MCF 10A (cell line): ENCODE measurements at regions of chr4 and their contacts with region 1.

Region 1: GRCh38 chr4:100093091-100093866 is 97.0 kb downstream of the DDIT4L start:
- DNase-seq: peak; percentile 94
- H3K4me3 Mint-ChIP-seq: no peak overlapping the region
- H3K27ac Mint-ChIP-seq: peak overlapping the region; percentile 87
- H3K4me1 Mint-ChIP-seq: peaks cover 19% of the 10 kb centered on the region
- H3K27me3 Mint-ChIP-seq: no peaks in the 10 kb centered on the region
- CTCF ChIP-seq: peak; percentile 66

Region 2: DNA sequence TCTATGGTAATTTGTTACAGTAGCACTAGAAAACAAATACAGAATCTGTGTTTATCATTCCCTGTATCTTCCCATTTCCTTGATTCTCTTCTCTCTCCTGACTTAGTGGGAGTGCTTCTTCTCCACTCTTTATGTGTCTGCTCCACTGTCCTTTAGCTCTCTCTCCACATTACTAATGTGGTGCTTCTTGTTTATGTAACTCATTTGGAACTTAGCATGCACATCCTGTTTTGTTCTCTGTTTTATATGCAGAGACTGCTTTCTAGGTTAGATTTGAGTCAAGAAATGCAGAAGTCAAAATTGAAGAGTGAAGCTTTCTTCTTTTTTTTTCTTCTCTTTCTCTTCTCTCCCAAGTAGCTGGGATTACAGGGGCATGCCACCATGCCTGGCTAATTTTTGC is 828.4 kb before region 1 on chr4:
- CTCF ChIA-PET with region 1: no interaction called
- POLR2A ChIA-PET with region 1: no interaction called
- intact Hi-C with region 1: no loop called
- DNase-seq: no peak
- H3K4me3 Mint-ChIP-seq: no peak overlapping the region
- H3K27ac Mint-ChIP-seq: no peak overlapping the region
- H3K4me1 Mint-ChIP-seq: no peaks in the 10 kb centered on the region
- H3K27me3 Mint-ChIP-seq: no peaks in the 10 kb centered on the region
- CTCF ChIP-seq: no peak

Region 3: DNA sequence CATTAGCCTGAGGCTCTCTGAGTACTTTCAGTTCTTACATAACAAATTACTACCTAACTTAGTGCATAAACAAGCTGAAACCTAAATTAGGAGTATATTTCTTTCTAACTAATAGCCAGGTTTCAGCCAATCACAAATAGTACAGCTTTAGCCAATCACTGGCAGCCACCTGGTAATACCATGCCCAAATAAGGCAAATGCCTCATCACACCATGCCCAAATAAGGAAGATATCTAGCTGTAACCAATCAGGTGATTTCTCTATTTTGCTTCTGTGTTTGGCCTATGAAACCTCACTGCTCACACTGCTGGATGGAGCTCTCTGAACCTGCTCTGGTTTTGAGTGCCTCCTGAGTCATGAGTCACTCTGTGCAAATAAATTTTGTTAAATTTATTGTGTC is 16.5 kb before region 1 on chr4:
- CTCF ChIA-PET with region 1: interaction called, 43 read pairs
- POLR2A ChIA-PET with region 1: interaction called, 5 read pairs
- intact Hi-C with region 1: no loop called
- DNase-seq: peak; percentile 12
- H3K4me3 Mint-ChIP-seq: no peak overlapping the region
- H3K27ac Mint-ChIP-seq: no peak overlapping the region
- H3K4me1 Mint-ChIP-seq: peaks cover 25% of the 10 kb centered on the region
- H3K27me3 Mint-ChIP-seq: no peaks in the 10 kb centered on the region
- CTCF ChIP-seq: no peak

Region 4: GRCh38 chr4:100106982-100107381 is 13.7 kb after region 1 on chr4:
- CTCF ChIA-PET with region 1: interaction called, 19 read pairs
- POLR2A ChIA-PET with region 1: no interaction called
- intact Hi-C with region 1: no loop called
- DNase-seq: no peak
- H3K4me3 Mint-ChIP-seq: no peak overlapping the region
- H3K27ac Mint-ChIP-seq: no peak overlapping the region
- H3K4me1 Mint-ChIP-seq: no peaks in the 10 kb centered on the region
- H3K27me3 Mint-ChIP-seq: no peaks in the 10 kb centered on the region
- CTCF ChIP-seq: no peak

Region 5: DNA sequence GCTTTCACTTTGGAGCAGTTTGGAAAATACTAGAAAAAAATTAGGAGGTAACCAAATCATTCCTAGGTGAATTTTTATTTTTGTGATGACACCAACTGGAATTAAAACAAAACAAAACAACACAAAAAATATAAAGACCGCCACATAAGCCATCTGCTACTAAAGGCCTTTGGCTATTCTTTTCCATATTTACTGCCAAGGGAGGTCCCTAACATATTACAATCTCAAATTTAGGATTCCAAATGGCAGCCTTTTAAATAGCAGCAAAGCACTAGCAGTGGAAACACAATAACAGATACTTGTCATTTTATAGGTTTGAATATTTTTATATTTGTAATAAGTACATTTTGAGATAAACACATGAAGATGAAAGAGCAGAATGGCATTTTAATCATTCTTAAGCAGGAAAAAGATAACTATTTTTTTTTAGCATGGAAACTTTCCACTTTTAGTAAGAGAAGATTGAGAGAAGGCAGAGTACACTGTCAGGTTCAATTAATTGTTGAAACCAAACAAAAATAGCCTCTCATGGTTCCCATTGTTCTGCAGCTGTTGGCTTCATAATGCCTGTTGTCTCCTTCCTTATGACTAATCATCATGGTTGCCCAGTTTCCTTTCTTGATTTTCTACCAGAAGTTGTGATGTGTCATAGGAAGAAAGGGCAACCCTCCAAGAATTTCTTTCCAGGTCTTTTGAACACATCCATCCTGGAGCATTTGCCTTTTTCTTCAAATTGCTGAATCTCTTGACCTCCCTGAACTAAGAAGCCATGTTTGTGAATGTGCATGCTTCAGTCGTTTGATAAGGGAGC is 643.6 kb after region 1 on chr4:
- CTCF ChIA-PET with region 1: interaction called, 9 read pairs
- POLR2A ChIA-PET with region 1: interaction called, 3 read pairs
- intact Hi-C with region 1: loop called (anchors 1 kb)
- DNase-seq: peak; percentile 93
- H3K4me3 Mint-ChIP-seq: no peak overlapping the region
- H3K27ac Mint-ChIP-seq: peak overlapping the region; percentile 92
- H3K4me1 Mint-ChIP-seq: peaks cover 25% of the 10 kb centered on the region
- H3K27me3 Mint-ChIP-seq: no peaks in the 10 kb centered on the region
- CTCF ChIP-seq: no peak

Region 6: GRCh38 chr4:101187841-101188240 is 1094.6 kb after region 1 on chr4:
- CTCF ChIA-PET with region 1: interaction called, 4 read pairs
- POLR2A ChIA-PET with region 1: no interaction called
- intact Hi-C with region 1: loop called (anchors 10 kb)
- DNase-seq: peak; percentile 43
- H3K4me3 Mint-ChIP-seq: no peak overlapping the region
- H3K27ac Mint-ChIP-seq: no peak overlapping the region
- H3K4me1 Mint-ChIP-seq: peaks cover 26% of the 10 kb centered on the region
- H3K27me3 Mint-ChIP-seq: no peaks in the 10 kb centered on the region
- CTCF ChIP-seq: peak; percentile 30